Aorta (tissue), 5 donors: ENCODE measurements at regions of chr12 and their contacts with region 1.

Region 1: GRCh38 chr12:19967486-19967885 is 400.9 kb upstream of the PDE3A start:
- DNase-seq: no peak
- ATAC-seq: peak; percentile 84
- H3K4me3 ChIP-seq: no peak overlapping the region
- H3K27ac ChIP-seq: peak overlapping the region; percentile 28 to 51
- H3K4me1 ChIP-seq: peaks cover 6 to 16% of the 10 kb centered on the region in 2 donors
- H3K27me3 ChIP-seq: no peaks in the 10 kb centered on the region

Region 2: DNA sequence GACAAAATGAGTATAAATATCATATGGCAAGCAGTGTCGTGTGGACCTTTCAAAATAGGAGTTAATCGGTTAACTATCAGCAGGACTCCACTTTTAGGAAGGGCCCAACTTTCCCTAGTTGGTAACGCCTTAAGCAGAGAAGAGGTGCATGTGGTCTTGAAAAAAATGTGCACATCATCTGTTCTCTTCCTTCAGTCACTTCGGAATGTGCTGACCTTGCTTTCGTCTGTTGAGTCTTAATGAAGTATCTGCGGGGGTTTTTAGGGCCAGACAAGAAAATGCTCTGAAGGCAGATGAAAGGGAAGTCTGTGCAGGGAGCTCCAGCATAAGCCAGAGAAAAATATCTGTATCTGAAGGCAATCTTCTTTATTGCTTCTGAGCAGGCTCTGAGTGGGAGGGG is 343.0 kb before region 1 on chr12:
- intact Hi-C with region 1: no loop called
- DNase-seq: no peak
- ATAC-seq: no peak
- H3K4me3 ChIP-seq: no peak overlapping the region
- H3K27ac ChIP-seq: no peak overlapping the region
- H3K4me1 ChIP-seq: no peaks in the 10 kb centered on the region
- H3K27me3 ChIP-seq: no peaks in the 10 kb centered on the region

Region 3: GRCh38 chr12:19893514-19893913 is 74.0 kb before region 1 on chr12:
- intact Hi-C with region 1: loop called in 1 of 2 experiments (anchors 5 kb)
- DNase-seq: no peak
- ATAC-seq: no peak
- H3K4me3 ChIP-seq: no peak overlapping the region
- H3K27ac ChIP-seq: peak overlapping the region in 1 of 2 donors; percentile 67
- H3K4me1 ChIP-seq: peaks cover 0 to 5% of the 10 kb centered on the region in 2 donors
- H3K27me3 ChIP-seq: no peaks in the 10 kb centered on the region